ENCODE measurements at regions of chr5 and their contacts with region 1.

Region 1: GRCh38 chr5:169805527-169805934 is 168.5 kb downstream of the DOCK2 start:
- DNase-seq: peak; percentile 82
- ATAC-seq: peak; percentile 90
- H3K4me3 Mint-ChIP-seq: peak overlapping the region; percentile 38
- H3K27ac Mint-ChIP-seq: peak overlapping the region; percentile 98
- H3K4me1 Mint-ChIP-seq: peaks cover 51% of the 10 kb centered on the region
- H3K27me3 Mint-ChIP-seq: no peaks in the 10 kb centered on the region

Region 2: DNA sequence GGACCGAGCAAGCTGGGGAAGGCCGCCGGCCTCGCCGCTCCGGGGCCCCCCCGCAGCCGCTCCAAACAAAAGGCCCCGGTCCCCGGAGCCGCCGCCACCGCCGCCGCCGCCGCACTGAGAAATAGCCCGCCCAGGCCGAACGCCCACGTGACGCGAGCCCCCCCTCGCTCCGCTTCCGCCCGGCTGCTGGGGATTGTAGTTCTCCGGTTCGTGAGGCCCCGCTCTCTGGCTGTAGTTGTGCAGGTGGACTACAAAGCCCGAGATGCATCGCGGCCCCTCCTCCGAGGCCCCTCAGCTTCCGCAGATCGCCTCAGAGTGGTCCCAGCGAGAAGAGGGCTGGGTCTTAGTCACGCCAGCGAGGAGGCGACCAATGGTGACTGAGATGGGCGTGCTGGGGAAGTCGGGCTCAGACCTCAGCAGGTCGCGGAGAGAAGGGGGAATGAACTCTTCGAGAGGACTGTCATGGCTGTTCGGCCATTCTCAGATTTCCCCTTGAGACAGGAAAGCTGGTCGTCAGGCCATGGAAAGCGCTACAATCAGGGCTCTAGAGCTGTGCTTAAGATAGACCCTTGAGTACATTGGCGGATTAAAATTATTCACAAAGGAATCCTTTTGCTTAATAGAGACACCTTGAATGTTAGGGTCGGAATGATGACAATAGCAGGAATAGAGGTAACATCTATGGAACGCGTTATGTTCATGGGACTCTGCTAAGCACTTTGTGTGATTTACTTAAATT is 1225.9 kb before region 1 on chr5:
- CTCF ChIA-PET with region 1: no interaction called
- POLR2A ChIA-PET with region 1: no interaction called
- intact Hi-C with region 1: loop called in 1 of 2 experiments (anchors 2 kb)
- DNase-seq: peak; percentile 98
- ATAC-seq: peak; percentile 98
- H3K4me3 Mint-ChIP-seq: peak overlapping the region; percentile 91
- H3K27ac Mint-ChIP-seq: peak overlapping the region; percentile 99
- H3K4me1 Mint-ChIP-seq: peaks cover 34% of the 10 kb centered on the region
- H3K27me3 Mint-ChIP-seq: no peaks in the 10 kb centered on the region

Region 3: DNA sequence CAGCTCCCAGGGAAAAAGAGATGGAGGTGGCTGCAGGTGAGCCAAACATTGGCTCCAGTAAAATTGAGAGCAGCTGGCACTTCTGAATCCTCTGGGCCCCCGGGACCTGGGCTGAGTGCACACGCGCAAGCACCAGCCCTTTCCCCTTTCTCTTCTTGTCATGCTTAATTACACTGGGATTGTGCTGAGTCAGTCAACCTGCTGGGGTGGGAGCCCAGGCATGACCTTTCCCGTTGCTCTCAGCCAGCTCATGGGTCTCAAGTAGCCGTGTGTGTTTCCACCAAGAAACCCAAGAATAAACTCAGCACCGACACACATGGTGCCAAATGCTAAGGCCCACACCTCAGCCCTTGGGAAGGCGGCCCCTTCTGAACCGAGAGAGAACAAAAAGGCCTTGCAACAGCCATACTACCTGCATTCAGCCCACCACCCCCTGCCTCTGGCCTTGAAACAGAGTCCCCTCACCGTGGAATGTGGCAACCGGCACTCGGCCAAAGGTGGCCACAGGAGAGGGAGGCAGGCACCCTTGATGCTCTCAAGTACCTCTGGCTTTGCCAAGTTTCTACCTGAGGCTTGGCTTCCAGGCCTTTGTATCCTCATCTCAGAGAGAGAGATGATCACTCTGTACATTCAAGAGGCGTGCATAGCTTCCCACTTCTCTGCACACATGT is 532.7 kb before region 1 on chr5:
- CTCF ChIA-PET with region 1: no interaction called
- POLR2A ChIA-PET with region 1: no interaction called
- intact Hi-C with region 1: no loop called
- DNase-seq: no peak
- ATAC-seq: no peak
- H3K4me3 Mint-ChIP-seq: no peak overlapping the region
- H3K27ac Mint-ChIP-seq: no peak overlapping the region
- H3K4me1 Mint-ChIP-seq: no peaks in the 10 kb centered on the region
- H3K27me3 Mint-ChIP-seq: peaks cover 2% of the 10 kb centered on the region

Region 4: GRCh38 chr5:169637085-169637548 is 168.4 kb before region 1 on chr5 and contains the start of gene DOCK2:
- CTCF ChIA-PET with region 1: interaction called, 3 read pairs
- POLR2A ChIA-PET with region 1: interaction called, 9 read pairs
- intact Hi-C with region 1: loop called in 1 of 2 experiments (anchors 5 kb)
- DNase-seq: peak; percentile 82
- ATAC-seq: peak; percentile 77
- H3K4me3 Mint-ChIP-seq: peak within 1 kb of the TSS; percentile 89
- H3K27ac Mint-ChIP-seq: peak within 1 kb of the TSS; percentile 94
- H3K4me1 Mint-ChIP-seq: peaks cover 46% of the 10 kb centered on the region
- H3K27me3 Mint-ChIP-seq: no peaks in the 10 kb centered on the region
- total RNA-seq, gene DOCK2: 189 to 198 TPM

Region 5: DNA sequence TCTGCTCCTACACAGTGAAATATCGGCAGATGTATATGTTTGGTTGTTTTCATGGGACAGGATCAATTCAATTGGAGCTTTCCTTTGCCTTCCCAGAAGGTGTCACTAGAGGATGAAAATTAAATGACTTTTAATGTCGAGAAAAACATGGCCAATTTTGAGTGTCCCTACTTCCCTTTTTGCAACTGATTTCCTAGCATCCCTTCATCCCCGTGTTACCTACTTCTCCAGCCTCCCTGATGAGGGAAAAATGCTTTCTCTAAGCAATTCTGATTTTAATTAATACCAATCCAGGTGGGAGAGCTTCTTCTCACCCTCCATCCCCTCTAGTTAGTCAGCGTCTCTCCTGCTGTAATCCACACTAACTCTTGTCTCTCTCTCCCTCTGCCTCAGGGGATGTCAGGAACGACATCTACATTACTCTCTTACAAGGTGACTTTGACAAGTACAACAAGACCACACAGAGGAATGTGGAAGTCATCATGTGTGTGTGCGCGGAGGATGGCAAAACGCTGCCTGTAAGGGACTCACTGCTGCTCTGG is 103.5 kb before region 1 on chr5:
- CTCF ChIA-PET with region 1: interaction called, 4 read pairs
- POLR2A ChIA-PET with region 1: no interaction called
- intact Hi-C with region 1: loop called in 1 of 2 experiments (anchors 1 kb)
- DNase-seq: no peak
- ATAC-seq: no peak
- H3K4me3 Mint-ChIP-seq: no peak overlapping the region
- H3K27ac Mint-ChIP-seq: peak overlapping the region; percentile 76
- H3K4me1 Mint-ChIP-seq: peaks cover 44% of the 10 kb centered on the region
- H3K27me3 Mint-ChIP-seq: no peaks in the 10 kb centered on the region

Region 6: DNA sequence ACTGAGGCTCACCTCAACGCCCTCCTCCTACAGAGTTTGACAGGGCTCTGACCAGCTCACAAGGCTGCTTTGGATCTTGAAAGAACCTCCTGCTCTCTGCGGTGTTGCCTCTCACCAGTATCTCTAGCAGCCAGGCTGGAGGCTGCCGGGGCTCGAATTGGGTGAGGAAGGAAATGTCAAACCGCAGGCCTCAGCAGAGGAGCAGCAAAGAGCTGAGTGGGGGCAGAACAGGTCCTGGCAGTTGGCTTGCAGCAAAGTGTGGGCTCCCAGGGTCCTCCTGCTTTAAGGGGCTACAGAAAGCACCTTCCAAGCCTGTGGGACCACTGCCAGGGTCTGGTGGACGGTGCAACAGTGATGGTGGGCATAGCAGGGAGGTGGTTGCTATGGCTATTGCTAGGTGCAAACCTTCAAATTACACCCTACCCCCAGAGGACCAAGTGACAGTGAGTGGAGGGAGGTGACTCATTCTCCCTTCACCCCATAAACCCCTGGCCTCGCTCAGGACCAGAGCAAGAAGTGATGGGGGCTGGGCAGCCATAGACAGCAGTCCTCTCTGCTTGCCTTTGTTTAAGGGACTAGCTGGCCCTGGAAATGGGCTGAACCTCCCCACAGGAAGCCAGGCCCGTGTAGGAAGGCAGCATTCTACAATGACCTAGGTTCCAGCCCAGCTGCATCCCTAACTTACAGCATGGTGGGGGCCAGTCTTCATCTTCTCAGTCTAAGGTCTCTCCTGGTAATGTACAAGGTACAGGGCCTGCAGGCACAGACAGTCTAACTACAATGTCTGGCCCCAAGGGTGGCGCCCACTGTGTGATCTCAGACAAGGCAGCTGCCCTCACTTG is 473.3 kb after region 1 on chr5:
- CTCF ChIA-PET with region 1: no interaction called
- POLR2A ChIA-PET with region 1: interaction called, 14 read pairs
- intact Hi-C with region 1: no loop called
- DNase-seq: peak; percentile 93
- ATAC-seq: peak; percentile 73
- H3K4me3 Mint-ChIP-seq: peak overlapping the region; percentile 48
- H3K27ac Mint-ChIP-seq: peak overlapping the region; percentile 90
- H3K4me1 Mint-ChIP-seq: peaks cover 97% of the 10 kb centered on the region
- H3K27me3 Mint-ChIP-seq: no peaks in the 10 kb centered on the region

Measured in activated CD4-positive, alpha-beta T cell treated with anti-CD3 and anti-CD28 coated beads for 36 hours (primary cell).